CD4-positive, alpha-beta memory T cell (primary cell): ENCODE measurements at regions of chr1 and their contacts with region 1.

Region 1: GRCh38 chr1:31013187-31013864 is 52.2 kb downstream of the PUM1 start:
- DNase-seq: no peak
- H3K4me3 ChIP-seq: no peak overlapping the region
- H3K4me3 Mint-ChIP-seq: peak overlapping the region in 3 of 8 donors; percentile 30 to 68 (median 53)
- H3K27ac ChIP-seq: no peak overlapping the region
- H3K27ac Mint-ChIP-seq: peak overlapping the region in 3 of 7 donors; percentile 14 to 78 (median 49)
- H3K4me1 ChIP-seq: peaks cover 54% of the 10 kb centered on the region
- H3K4me1 Mint-ChIP-seq: peaks cover 44 to 67% (median 56%) of the 10 kb centered on the region in 4 donors
- H3K27me3 ChIP-seq: no peaks in the 10 kb centered on the region
- H3K27me3 Mint-ChIP-seq: no peaks in the 10 kb centered on the region

Region 2: DNA sequence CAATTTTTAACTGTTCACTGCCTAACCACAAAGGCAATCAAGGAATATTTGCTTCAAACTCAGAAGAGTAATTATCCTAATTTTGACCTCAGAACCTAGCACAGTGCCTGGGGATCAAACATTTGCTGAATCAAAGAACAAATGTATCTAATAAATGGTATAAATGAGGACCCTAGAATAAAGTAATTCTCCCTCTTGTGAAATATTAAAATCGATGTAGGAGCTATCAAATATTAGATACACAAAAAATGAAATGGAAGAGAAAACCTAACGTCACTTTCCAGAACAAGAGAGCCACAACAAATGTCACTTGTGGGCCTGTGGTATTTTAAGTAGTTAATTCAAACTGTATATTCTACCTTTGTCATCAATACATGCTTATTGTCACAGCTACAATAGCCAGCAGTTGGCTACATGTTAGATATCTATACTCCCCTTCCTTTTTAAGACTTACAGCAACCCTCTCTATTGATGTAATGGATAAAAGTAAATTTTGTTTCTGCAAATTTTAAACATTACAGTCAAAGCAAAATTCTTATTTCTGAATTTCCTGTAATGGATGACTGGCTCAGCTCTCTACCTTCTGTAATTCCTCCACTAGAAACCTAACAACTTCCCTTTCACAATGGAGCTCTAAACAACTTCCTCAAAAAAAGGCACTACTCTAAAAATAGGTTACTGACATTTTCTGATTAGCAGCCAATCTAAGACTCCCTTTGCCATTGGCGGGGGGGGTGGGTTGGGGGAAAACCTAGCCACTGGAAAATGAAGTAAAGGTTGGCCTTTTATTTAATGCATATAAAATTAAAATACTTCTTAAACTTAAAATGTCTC is 14.6 kb after region 1 on chr1:
- CTCF ChIA-PET with region 1: interaction called, 3 read pairs
- POLR2A ChIA-PET with region 1: interaction called, 3 read pairs
- intact Hi-C with region 1: loop called (anchors 1 kb)
- DNase-seq: no peak
- H3K4me3 ChIP-seq: no peak overlapping the region
- H3K4me3 Mint-ChIP-seq: peak overlapping the region in 2 of 8 donors; percentile 3 to 43
- H3K27ac ChIP-seq: no peak overlapping the region
- H3K27ac Mint-ChIP-seq: peak overlapping the region in 4 of 7 donors; percentile 1 to 80 (median 22)
- H3K4me1 ChIP-seq: peaks cover 81% of the 10 kb centered on the region
- H3K4me1 Mint-ChIP-seq: peaks cover 52 to 89% (median 69%) of the 10 kb centered on the region in 4 donors
- H3K27me3 ChIP-seq: no peaks in the 10 kb centered on the region
- H3K27me3 Mint-ChIP-seq: no peaks in the 10 kb centered on the region